ENCODE measurements at regions of chr7 and their contacts with region 1.

Region 1: DNA sequence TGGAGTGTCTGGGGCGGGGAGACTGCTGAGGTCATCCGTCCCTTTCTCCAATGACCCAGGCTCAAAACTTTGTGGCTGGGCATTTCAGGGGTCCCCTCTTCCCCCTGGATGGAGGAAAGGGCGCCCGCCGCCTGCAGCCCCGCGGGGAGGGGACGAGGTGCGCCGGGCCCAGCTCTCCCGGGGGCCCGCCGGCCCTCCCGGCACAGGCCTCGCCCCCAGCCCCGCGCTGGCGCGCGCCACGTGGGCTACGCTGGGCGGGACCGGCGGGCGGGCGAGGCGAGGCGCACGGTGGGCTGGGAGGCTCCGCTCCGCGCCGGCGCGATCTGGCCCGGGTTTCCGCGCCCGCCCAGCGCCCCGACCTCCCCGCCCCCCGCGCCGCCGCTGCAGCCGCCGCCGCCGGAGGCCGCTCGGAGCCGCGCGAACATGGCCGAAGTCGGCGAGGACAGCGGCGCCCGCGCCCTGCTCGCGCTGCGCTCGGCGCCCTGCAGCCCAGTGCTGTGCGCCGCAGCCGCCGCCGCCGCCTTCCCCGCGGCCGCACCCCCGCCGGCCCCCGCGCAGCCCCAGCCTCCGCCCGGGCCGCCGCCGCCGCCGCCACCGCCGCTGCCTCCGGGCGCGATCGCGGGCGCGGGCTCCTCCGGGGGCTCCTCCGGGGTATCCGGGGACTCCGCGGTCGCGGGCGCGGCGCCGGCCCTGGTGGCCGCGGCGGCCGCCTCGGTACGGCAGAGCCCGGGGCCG is at the start of gene FOXK1:
- DNase-seq: peak; percentile 91
- ATAC-seq: peak; percentile 80
- total RNA-seq, gene FOXK1: 17.7 TPM

Region 2: GRCh38 chr7:4641667-4642467 is 40.2 kb before region 1 on chr7:
- intact Hi-C with region 1: loop called (anchors 5 kb)
- DNase-seq: peak; percentile 98
- ATAC-seq: peak; percentile 98

Region 3: DNA sequence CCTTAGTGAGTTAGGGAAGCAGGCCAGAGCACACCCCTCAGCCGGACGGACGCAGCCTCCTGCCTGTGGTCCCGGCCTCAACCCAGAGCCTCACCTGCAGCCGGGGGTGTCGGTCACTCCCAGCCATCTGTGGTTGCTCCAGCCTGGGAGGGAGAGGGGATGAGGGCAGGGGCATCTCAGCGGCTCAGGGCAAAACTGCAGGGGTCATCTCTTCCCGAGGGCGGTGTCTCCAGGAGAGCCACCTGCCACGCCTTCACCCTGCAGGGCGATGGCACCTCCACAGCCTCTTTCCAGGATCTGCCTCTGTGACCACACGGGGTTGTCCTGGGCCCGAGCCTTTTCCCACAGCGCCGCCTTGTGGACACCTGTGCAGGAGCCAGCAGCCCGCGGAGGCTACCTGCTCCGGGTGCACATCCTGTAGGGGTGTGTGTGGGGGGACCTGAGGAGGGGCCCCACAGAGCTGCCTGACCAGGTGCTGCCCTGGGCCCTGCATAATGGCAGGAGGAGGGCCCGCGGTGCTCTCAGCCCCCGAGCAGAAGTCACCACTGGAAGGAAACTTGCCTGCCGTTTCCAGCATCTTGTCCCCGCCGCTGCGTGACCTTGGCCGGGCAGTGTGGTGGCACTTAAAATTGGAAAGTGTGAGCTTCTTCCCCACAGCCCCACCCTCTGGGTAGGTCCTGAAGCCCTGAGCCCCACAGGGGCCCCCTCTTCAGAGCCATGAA is 71.8 kb after region 1 on chr7:
- intact Hi-C with region 1: loop called (anchors 5 kb)
- DNase-seq: peak; percentile 89
- ATAC-seq: peak; percentile 84

Region 4: DNA sequence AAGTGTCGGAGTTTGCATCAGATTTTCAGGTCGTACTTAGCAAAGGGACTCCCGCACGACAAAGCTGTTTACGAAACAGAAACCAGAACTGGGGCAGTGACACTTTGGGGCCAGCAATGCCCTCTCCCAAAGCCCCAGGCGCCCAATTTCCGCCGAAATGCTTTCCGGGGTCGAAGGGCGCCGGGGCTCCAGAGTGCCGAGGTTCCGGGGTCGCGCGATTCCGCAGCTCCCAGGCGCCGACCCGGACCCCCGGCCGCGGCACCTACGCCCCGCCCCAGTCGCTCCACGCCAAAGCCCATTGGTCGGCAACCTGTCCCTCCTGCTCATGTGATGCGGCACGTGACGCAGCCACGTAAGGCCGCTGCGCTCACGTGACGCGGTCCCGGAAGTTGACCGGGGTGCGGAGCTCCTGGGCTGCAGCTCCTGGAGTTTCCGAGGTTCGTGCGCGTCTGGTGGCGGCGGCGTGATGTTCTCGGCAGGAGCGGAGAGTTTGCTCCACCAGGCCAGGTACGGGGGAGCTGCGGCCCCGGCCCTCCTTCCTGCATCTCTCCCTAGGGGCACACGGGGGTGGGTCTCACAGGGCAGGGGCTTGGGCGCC is 93.3 kb after region 1 on chr7 and contains the start of gene AP5Z1:
- intact Hi-C with region 1: no loop called
- DNase-seq: peak; percentile 99
- ATAC-seq: peak; percentile 98
- total RNA-seq, gene AP5Z1: 10.5 TPM